K562 (cell line): ENCODE measurements at regions of chr1 and their contacts with region 1.

Region 1: DNA sequence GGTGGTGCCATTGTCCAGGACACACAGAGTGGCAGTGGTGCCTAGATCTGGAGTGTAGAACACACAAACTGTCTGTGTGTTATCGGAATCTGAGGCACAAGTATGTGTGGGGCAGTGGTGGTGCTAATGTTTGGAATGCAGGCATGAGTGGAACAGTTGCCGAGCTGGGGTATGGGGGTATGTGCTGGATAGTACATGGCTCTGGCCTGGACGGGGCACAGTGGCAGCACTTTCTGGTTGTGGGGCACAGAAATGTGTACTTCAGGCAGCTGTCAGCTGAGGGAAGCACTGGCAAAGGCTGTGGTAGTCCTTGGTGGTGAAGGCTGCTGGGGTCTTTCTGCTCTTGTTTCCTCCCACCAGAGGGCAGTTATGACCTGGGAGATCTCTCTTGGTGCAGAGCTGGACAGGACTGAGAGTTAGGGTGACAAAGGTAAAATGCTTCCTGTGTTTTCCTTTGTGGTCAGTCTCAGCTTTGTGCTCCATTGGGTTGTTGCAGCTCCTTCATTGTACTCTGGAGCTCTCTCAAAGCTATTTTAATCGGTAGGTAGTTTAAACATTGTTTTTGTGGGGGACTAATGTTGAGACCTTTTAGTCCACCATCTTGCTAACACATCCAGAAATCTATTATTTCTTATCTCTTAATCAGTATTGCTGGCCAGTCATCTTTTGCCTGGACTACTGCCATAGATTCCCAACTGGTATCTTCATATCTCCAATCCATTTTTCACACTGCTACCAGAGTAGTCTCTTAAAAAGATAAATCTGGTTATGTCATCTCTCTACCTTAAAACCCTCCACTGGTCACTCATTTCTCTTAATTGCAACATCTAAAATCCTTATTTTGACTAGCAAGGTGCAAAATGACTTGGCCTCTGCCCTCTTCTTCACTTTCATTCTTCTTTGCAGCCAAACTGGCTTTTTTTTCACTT is 83.9 kb upstream of the NBPF4 start:
- DNase-seq: peak in 2 of 4 experiments; percentile 37 to 70
- ATAC-seq: peak; percentile 95
- H3K4me3 ChIP-seq: no peak overlapping the region
- H3K27ac ChIP-seq: no peak overlapping the region; the same call in 2 of the 3 replicates
- H3K4me1 ChIP-seq: peaks cover 3 to 20% of the 10 kb centered on the region in 2 experiments; a peak in 4 of 5 replicates
- H3K27me3 ChIP-seq: no peaks in the 10 kb centered on the region
- CTCF ChIP-seq: peak; percentile 68 to 78 (median 72)
- EP300 ChIP-seq: 0 out of 2 replicates have a peak, but pooled peaks have one; percentile 2
- POLR2A ChIP-seq: 0 out of 2 replicates have a peak, but pooled peaks have one; percentile 6
- RAD21 ChIP-seq: peak; percentile 44 to 84

Region 2: GRCh38 chr1:108208724-108209429 is 118.9 kb before region 1 on chr1:
- CTCF ChIA-PET with region 1: no interaction called
- POLR2A ChIA-PET with region 1: no interaction called
- in situ Hi-C with region 1: loop called (anchors 10 kb)
- intact Hi-C with region 1: no loop called
- DNase-seq: peak in 1 of 4 experiments; percentile 55
- ATAC-seq: peak; percentile 83
- H3K4me3 ChIP-seq: no peak overlapping the region
- H3K27ac ChIP-seq: no peak overlapping the region
- H3K4me1 ChIP-seq: peaks cover 4 to 6% of the 10 kb centered on the region in 2 experiments; a peak in 3 of 5 replicates
- H3K27me3 ChIP-seq: no peaks in the 10 kb centered on the region; a peak in 1 of 5 replicates
- CTCF ChIP-seq: no peak
- EP300 ChIP-seq: no peak
- POLR2A ChIP-seq: no peak
- RAD21 ChIP-seq: no peak

Region 3: DNA sequence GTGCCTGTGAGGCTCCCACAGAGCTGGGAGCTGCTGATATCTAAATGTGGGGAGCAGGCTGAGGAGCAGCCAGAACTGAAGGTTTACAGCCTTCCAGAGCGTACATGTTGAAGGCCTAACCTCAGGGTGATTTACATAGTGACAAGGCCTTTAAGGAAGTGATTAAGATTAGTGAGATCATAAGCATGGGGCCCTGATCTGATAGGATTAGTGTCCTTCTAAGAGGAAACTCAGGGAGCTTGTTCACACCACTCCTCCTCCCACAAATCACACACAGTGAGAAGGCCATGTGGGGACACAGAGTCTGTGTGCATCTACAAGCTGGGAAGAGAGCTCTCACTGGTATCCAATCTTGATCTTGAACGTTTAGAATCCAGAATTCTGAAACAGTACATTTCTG is 30.0 kb after region 1 on chr1:
- CTCF ChIA-PET with region 1: no interaction called
- POLR2A ChIA-PET with region 1: no interaction called
- in situ Hi-C with region 1: no loop called
- intact Hi-C with region 1: no loop called
- DNase-seq: peak in 2 of 4 experiments; percentile 13 to 36
- ATAC-seq: peak; percentile 62
- H3K4me3 ChIP-seq: no peak overlapping the region
- H3K27ac ChIP-seq: no peak overlapping the region
- H3K4me1 ChIP-seq: no peaks in the 10 kb centered on the region
- H3K27me3 ChIP-seq: no peaks in the 10 kb centered on the region
- CTCF ChIP-seq: no peak
- EP300 ChIP-seq: 0 out of 2 replicates have a peak, but pooled peaks have one; percentile 24
- POLR2A ChIP-seq: no peak
- RAD21 ChIP-seq: no peak

Region 4: GRCh38 chr1:108947871-108948525 is 620.2 kb after region 1 on chr1:
- CTCF ChIA-PET with region 1: no interaction called
- POLR2A ChIA-PET with region 1: no interaction called
- in situ Hi-C with region 1: no loop called
- intact Hi-C with region 1: no loop called
- DNase-seq: no peak
- ATAC-seq: no peak
- H3K4me3 ChIP-seq: no peak overlapping the region
- H3K27ac ChIP-seq: no peak overlapping the region
- H3K4me1 ChIP-seq: no peaks in the 10 kb centered on the region
- H3K27me3 ChIP-seq: no peaks in the 10 kb centered on the region
- CTCF ChIP-seq: no peak
- EP300 ChIP-seq: no peak
- POLR2A ChIP-seq: no peak
- RAD21 ChIP-seq: no peak